Activated naive CD4-positive, alpha-beta T cell treated with anti-CD3 and anti-CD28 coated beads for 36 hours (primary cell): ENCODE measurements at regions of chr2 and their contacts with region 1.

Region 1: DNA sequence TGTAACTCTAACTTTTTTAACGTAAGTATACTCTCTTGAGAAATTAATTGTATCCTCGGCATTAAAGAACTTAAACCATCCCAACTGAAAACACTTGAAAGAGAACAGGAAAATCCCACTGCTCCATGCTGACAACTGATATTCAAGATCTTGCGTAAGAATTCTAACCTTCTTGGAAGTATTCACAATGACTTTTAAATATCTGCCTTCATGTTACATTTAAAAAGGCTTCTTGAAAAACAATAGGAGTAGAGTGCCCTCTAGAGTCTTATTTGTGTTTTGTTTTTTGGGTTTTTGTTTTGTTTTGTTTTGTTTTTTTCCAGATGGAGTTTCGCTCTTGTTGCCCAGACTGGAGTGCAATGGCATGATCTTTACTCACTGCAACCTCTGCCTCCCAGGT is 65.4 kb upstream of the DNAJC10 start:
- DNase-seq: no peak
- H3K4me3 Mint-ChIP-seq: no peak overlapping the region
- H3K27ac Mint-ChIP-seq: no peak overlapping the region
- H3K4me1 Mint-ChIP-seq: peaks cover 5% of the 10 kb centered on the region
- H3K27me3 Mint-ChIP-seq: no peaks in the 10 kb centered on the region

Region 2: GRCh38 chr2:182186132-182186735 is 464.5 kb before region 1 on chr2:
- CTCF ChIA-PET with region 1: interaction called, 21 read pairs
- intact Hi-C with region 1: loop called (anchors 1 kb)
- DNase-seq: no peak
- H3K4me3 Mint-ChIP-seq: no peak overlapping the region
- H3K27ac Mint-ChIP-seq: no peak overlapping the region
- H3K4me1 Mint-ChIP-seq: no peaks in the 10 kb centered on the region
- H3K27me3 Mint-ChIP-seq: peaks cover 9% of the 10 kb centered on the region

Region 3: DNA sequence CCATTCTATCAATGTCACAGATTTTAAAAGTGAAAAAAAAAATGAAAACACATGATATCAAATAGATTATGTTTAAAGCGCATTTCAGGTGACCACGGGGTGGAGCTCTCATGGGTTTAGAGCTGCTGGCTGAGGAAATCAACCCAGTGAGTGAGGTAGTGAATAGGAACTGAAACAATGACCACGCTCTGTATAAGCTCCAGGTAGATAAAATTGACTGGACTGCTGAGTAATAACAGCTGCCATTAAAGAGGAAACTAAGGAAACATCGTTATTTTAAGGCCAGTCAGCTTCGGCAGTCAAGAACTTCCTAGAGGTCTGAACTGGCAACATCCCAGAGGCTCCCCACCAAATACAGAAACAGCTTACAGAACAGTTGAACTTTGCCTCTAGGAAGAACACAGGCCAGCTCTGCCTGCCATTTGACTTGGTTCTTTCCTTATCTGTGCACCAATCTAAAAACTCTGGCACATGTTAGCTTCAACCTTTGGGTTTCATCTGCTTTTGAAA is 409.8 kb before region 1 on chr2:
- CTCF ChIA-PET with region 1: interaction called, 6 read pairs
- intact Hi-C with region 1: loop called (anchors 1 kb)
- DNase-seq: peak; percentile 40
- H3K4me3 Mint-ChIP-seq: no peak overlapping the region
- H3K27ac Mint-ChIP-seq: no peak overlapping the region
- H3K4me1 Mint-ChIP-seq: no peaks in the 10 kb centered on the region
- H3K27me3 Mint-ChIP-seq: peaks cover 3% of the 10 kb centered on the region

Region 4: GRCh38 chr2:183193904-183194303 is 543.2 kb after region 1 on chr2:
- CTCF ChIA-PET with region 1: no interaction called
- intact Hi-C with region 1: no loop called
- DNase-seq: no peak
- H3K4me3 Mint-ChIP-seq: no peak overlapping the region
- H3K27ac Mint-ChIP-seq: no peak overlapping the region
- H3K4me1 Mint-ChIP-seq: peaks cover 2% of the 10 kb centered on the region
- H3K27me3 Mint-ChIP-seq: no peaks in the 10 kb centered on the region